ENCODE measurements at regions of chr3 and their contacts with region 1.

Region 1: DNA sequence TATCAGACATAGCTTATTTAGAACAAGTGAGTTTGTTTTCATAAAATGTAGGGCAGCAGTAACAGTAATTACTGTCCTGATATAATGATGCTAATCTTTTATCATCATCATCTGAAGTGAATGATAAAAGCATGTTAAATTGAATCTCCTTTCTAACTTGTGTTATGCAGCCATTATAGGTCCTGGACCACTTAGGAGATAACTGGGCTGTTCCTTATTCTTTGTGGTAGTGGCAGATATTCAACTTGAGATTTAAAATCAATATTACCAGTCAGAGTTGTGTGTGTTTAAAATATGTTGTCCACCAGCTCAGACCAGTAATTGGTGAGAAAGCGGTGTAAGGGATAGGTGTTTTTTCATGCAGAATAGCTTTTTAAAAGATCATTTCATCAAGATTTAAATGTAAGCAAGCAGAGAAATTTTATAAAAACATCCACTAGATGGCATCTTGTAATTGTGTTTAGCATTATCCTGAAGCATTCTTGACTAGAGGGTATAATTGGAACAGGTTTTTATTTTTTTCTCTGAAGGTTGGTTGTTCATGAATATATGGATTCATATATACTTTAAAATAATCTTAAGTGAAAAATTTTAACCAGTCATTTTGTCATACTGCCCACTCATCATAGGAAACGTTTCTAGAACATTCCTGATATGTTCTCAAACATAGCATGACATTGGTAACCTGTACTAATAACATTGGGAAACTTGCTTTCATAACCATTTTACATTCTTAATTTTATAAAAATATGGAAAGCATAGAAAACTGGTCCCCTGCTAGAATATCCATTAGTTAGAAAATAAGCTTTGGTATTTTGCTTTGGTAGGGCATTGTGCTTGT is 153.9 kb downstream of the BBX start:
- DNase-seq: peak; percentile 20
- H3K27ac ChIP-seq: no peak overlapping the region
- CTCF ChIP-seq: peak; percentile 68

Region 2: DNA sequence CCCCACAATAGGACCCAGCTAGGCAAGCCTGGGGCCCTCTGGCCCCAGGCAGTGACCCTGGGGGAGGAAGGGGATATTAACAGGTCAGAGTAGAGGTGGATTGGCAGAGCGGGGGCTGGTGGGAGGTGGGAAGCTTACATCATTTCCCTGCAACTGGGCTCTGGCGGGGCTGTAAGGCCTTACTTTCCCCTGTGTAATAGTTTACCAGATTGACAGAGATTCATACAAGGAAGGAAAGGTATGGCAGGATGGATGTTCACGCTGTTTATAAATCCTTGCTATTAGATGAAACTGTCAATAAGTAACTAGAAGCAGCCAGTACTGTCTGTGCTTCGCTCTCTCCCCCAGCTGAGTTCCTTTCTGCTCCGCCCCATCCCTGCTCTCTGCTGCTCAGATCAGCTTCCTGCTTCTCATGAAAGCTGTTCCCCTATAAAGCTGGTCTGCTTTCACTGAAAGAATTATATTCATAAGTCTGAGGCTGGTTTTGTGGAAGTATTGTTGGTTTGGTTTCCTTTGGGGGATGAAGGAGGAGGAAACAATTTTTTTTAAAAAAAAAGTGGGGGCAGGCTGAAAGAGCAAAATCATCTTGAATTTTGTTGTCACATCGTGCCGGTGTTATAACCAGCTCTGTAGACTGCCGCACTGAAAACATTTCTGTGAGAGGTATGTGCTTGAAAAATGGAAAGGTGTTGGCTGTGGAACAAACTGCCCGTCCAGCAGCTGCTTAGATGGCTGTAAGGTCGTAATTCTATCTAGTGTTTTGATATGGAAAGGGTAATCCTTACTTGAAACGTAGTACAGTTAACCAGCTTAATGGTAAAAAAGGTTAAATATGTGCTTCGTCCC is 77.5 kb before region 1 on chr3:
- CTCF ChIA-PET with region 1: no interaction called
- POLR2A ChIA-PET with region 1: no interaction called
- DNase-seq: peak; percentile 17
- H3K27ac ChIP-seq: peak overlapping the region; percentile 26; the same call in 1 of the 2 replicates
- CTCF ChIP-seq: no peak

Region 3: GRCh38 chr3:107660306-107660976 is 16.2 kb before region 1 on chr3:
- CTCF ChIA-PET with region 1: interaction called, 15 read pairs
- POLR2A ChIA-PET with region 1: no interaction called
- DNase-seq: no peak
- H3K27ac ChIP-seq: no peak overlapping the region
- CTCF ChIP-seq: peak; percentile 79

Region 4: DNA sequence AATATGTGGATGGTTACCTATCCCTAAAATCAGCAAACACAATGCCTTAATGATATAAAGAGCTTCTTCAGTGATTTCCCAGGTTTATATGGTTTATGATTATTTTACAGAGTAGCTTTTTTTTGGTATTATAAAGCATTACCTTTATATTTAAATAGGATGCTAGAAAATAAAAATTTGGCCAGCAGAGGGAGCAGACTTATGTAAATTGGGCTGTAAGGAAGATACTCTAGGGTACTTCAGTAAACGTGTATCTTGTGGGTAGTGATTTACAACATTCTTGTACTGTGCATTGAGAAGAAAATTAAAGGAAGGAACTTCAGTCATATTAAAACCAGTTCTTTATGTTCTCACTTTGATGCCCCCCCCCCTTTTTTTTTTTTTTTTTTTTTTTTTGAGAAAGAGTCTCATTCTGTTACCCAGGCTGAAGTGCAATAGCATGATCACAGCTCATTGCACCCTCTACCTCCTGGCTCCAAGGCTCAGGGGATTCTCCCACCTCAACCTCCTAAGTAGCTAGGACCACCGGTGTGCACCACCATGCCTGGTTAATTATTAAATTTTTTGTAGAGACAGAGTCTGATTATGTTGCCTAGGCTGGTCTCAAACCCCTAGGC is 13.9 kb after region 1 on chr3:
- CTCF ChIA-PET with region 1: interaction called, 12 read pairs
- POLR2A ChIA-PET with region 1: no interaction called
- DNase-seq: peak; percentile 36
- H3K27ac ChIP-seq: no peak overlapping the region
- CTCF ChIP-seq: peak; percentile 57

Region 5: DNA sequence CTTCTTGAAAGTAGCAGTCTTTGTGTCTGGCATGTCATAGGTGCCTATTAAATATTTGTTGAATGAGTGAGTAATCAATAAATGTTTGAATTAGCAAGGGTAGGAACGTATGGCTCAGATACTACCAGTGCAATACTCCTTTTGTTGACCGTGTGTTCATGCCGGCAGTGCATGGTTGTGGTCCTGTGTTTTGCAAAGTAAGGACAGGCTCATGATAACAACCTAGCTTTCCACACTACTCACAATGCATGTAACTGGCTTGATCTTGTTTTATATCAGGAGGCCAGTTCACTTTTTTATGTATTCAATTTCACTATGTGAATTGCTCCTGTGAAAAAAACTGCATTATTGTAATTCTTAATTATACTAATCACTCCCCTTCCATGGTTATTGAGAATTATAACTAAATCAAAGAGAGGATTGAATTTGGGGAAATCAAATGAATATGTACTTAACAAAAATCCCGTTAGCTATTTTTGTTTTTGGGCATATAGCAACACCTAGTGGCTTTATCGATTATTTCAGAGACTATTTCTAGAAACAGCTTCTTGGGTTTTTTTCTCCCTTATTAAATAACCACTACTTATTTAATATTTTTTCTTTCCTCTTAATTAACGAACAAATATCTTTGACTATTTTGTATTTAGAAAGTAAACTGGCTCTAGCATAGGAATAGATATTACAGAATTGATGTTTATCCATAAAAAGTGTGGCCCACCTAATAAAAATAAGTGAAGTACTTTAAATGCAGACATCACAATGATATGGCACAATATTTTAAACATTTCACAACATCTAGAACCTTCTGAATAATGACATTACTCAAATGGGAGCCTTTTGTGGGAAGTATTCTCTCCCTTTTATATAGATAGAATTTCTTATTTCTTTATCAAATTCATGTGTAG is 64.6 kb after region 1 on chr3:
- CTCF ChIA-PET with region 1: interaction called, 13 read pairs
- POLR2A ChIA-PET with region 1: no interaction called
- DNase-seq: peak; percentile 14
- H3K27ac ChIP-seq: no peak overlapping the region
- CTCF ChIP-seq: peak; percentile 69